IMR-90 (cell line): ENCODE measurements at regions of chr5 and their contacts with region 1.

Region 1: GRCh38 chr5:66021585-66021984 is 95.2 kb downstream of the ERBIN start:
- DNase-seq: no peak
- ATAC-seq: no peak
- H3K4me3 ChIP-seq: no peak overlapping the region
- H3K27ac ChIP-seq: no peak overlapping the region
- H3K4me1 ChIP-seq: no peaks in the 10 kb centered on the region
- H3K27me3 ChIP-seq: no peaks in the 10 kb centered on the region
- CTCF ChIP-seq: no peak
- POLR2A ChIP-seq: no peak
- RAD21 ChIP-seq: no peak

Region 2: GRCh38 chr5:66004216-66004615 is 17.4 kb before region 1 on chr5:
- CTCF ChIA-PET with region 1: no interaction called
- POLR2A ChIA-PET with region 1: no interaction called
- dilution Hi-C with region 1: no loop called
- in situ Hi-C with region 1: no loop called
- intact Hi-C with region 1: no loop called
- DNase-seq: no peak
- ATAC-seq: no peak
- H3K4me3 ChIP-seq: no peak overlapping the region
- H3K27ac ChIP-seq: no peak overlapping the region
- H3K4me1 ChIP-seq: peaks cover 2% of the 10 kb centered on the region; the same call in 1 of the 2 replicates
- H3K27me3 ChIP-seq: no peaks in the 10 kb centered on the region
- CTCF ChIP-seq: no peak
- POLR2A ChIP-seq: no peak
- RAD21 ChIP-seq: no peak

Region 3: DNA sequence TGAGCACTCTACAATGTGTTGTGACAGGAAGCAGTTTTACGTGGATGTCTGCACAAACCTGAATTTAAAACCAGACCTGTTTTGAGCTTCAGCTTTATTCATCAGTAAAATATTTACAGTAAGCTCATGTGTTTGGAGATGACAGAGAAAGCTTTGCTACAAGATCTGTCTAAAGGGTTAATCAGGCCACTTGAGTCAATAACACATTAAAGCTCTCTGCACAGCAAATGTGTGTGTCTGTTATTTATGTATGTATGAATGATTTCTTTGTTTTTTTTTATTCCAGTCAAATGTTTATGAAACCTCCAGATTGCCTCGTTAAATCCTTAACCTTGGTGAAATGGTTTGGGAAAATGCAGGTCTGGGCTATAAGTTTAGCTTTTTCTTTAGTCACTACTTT is 45.2 kb after region 1 on chr5:
- CTCF ChIA-PET with region 1: no interaction called
- POLR2A ChIA-PET with region 1: no interaction called
- dilution Hi-C with region 1: no loop called
- in situ Hi-C with region 1: no loop called
- intact Hi-C with region 1: loop called (anchors 5 kb)
- DNase-seq: no peak
- ATAC-seq: no peak
- H3K4me3 ChIP-seq: no peak overlapping the region
- H3K27ac ChIP-seq: no peak overlapping the region
- H3K4me1 ChIP-seq: no peaks in the 10 kb centered on the region
- H3K27me3 ChIP-seq: no peaks in the 10 kb centered on the region
- CTCF ChIP-seq: no peak
- POLR2A ChIP-seq: no peak
- RAD21 ChIP-seq: no peak